Esophagus squamous epithelium (tissue), 5 donors: ENCODE measurements at regions of chr10 and their contacts with region 1.

Region 1: DNA sequence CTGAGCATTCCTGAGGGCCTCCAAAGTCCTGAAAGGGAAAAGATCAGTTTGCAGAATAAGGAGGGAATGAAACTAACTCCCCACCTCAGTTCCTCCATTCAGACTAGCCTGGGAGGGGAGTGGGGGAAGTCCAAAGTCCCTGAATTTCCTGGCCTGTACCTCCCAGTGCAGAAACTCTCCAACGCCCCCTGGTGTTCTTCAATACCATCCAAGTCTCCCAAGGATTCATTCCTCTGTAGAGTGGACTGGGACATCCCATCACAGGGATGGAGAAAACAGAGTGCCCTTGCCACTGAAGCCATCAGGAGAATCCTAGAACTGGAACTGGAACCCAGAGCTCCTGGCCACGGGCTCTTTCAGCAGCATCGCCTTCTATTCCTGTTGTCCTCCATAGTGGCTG is 1.6 kb upstream of the COL13A1 start:
- DNase-seq: no peak
- H3K4me3 ChIP-seq: no peak overlapping the region
- H3K27ac ChIP-seq: no peak overlapping the region
- H3K4me1 ChIP-seq: peaks cover 8 to 34% (median 9%) of the 10 kb centered on the region in 3 donors
- H3K27me3 ChIP-seq: peaks cover 0 to 60% (median 2%) of the 10 kb centered on the region in 4 donors
- CTCF ChIP-seq: peak; percentile 20 to 65 (median 48)
- POLR2A ChIP-seq: no peak

Region 2: DNA sequence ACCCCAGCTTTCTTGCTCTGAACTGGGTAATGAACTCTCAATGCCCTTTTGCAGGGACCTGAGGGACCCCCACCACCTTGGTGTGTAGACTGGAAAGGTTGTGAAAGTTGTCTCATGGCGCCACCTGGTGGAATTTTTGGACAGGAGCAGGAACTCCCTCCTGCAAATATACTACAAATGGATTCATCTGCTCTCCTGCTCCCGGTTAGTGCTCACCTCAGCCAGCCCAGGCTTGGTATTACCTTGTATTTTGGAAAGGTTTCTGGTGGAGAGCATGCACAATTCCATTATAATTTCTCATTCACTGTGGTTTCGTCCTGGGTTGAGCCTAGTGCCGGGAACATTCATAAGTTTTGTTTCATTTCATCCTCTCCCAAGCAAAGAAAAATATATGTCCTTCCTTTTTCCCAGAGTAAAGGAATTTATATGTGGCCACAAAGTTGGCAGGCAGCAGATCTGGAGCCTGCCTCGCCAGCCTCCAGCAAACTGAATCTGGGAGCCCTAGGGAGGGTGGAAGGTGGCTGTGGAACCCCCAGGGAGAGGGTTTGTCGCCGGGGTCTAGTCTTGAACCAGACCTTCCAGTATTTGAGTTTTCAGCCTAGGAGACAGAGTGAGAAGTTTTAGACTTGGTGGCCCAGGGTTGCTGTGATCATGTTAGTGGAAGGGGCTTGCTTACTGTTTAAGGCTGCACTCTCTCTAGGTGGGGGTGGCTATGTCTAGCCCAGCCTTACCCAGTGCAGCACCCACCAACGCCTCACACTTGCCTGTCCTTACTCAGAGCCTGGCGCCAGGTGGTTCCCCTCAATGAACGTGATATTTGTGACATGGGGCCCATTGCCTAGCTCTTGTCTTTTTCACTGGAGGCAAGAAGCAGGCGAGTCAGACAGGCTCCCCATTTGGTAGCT is 160.6 kb before region 1 on chr10:
- intact Hi-C with region 1: loop called (anchors 10 kb)
- DNase-seq: peak; percentile 11
- H3K4me3 ChIP-seq: peak overlapping the region in 1 of 4 donors; percentile 12
- H3K27ac ChIP-seq: peak overlapping the region; percentile 68 to 77 (median 74)
- H3K4me1 ChIP-seq: peaks cover 8 to 46% (median 23%) of the 10 kb centered on the region in 3 donors
- H3K27me3 ChIP-seq: peaks cover 0 to 8% (median 0%) of the 10 kb centered on the region in 4 donors
- CTCF ChIP-seq: peak; percentile 68 to 90 (median 86)
- POLR2A ChIP-seq: no peak

Region 3: DNA sequence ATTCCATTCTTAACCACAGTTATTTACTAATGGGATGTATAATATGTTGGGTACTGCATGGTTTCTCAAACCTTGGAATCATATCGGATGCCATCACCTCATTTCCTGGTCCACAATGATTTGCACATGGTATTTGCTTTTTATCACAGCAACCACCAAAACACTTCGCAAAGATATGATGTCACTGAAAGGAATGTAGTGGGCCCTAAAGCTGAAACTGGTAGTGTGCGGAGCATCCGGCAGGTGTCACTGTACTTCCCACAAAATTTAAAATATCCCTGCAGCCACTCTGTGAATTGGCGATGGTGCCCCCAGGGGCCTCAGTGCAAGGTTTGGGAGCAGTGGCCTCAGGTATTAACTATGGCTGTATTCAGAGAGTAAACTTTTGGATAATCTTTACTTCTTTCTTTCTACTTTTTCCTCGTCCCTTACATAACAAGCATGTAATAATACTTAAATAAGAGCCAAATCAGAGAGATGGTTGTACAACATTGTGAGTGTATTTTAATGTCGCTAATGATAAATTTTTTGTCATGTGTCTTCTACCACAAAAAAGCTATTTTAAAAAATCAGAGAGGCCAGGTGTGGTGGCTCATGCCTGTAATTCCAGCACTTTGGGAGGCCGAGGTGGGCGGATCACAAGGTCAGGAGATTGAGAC is 103.9 kb before region 1 on chr10:
- intact Hi-C with region 1: no loop called
- DNase-seq: no peak
- H3K4me3 ChIP-seq: no peak overlapping the region
- H3K27ac ChIP-seq: no peak overlapping the region
- H3K4me1 ChIP-seq: no peaks in the 10 kb centered on the region
- H3K27me3 ChIP-seq: peaks cover 0 to under 1% (median 0%) of the 10 kb centered on the region in 4 donors
- CTCF ChIP-seq: peak in 5 of 6 experiments; percentile 20 to 51 (median 33)
- POLR2A ChIP-seq: no peak

Region 4: GRCh38 chr10:69914398-69915214 is 114.5 kb after region 1 on chr10:
- intact Hi-C with region 1: loop called (anchors 10 kb)
- DNase-seq: no peak
- H3K4me3 ChIP-seq: no peak overlapping the region
- H3K27ac ChIP-seq: no peak overlapping the region
- H3K4me1 ChIP-seq: peaks cover 8 to 46% (median 17%) of the 10 kb centered on the region in 3 donors
- H3K27me3 ChIP-seq: peaks cover 0 to 27% (median 0%) of the 10 kb centered on the region in 4 donors
- CTCF ChIP-seq: peak; percentile 67 to 96 (median 92)
- POLR2A ChIP-seq: no peak